MCF 10A (cell line): ENCODE measurements at regions of chr2 and their contacts with region 1.

Region 1: DNA sequence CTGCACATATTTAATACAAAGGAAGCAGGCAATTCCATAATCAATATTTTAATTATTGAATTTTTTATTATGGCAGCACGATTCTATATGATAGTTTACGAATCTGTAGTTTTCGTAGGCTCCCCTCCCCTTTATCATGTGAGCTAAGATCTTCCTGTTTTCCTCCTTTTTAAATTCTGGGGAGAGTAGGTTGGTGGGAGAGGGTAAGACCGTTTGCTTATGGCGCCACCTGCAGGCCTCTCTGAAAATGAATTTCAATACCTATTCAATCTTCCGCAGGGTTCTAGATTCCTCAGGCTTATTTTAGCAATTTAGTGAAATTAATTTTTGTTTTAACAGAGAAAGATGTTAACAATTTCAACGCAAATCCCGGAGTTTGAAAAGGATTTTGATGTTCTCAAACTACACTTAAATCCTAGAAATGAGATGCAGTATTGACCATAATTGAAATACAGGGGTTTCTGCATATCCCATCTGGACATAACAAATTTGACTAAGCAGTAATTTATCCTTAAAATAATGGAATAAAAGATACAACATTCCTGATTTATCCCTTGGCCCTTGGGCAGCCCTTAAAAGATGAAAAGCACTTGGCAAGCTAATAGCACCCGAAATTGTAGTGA is 12.8 kb upstream of the GBX2 start:
- DNase-seq: peak; percentile 75
- H3K4me3 Mint-ChIP-seq: no peak overlapping the region
- H3K27ac Mint-ChIP-seq: no peak overlapping the region
- H3K4me1 Mint-ChIP-seq: peaks cover 13% of the 10 kb centered on the region
- H3K27me3 Mint-ChIP-seq: no peaks in the 10 kb centered on the region
- CTCF ChIP-seq: peak; percentile 57

Region 2: GRCh38 chr2:235766278-235766677 is 414.7 kb before region 1 on chr2:
- CTCF ChIA-PET with region 1: interaction called, 3 read pairs
- POLR2A ChIA-PET with region 1: no interaction called
- intact Hi-C with region 1: loop called (anchors 1 kb)
- DNase-seq: peak; percentile 81
- H3K4me3 Mint-ChIP-seq: no peak overlapping the region
- H3K27ac Mint-ChIP-seq: peak overlapping the region; percentile 88
- H3K4me1 Mint-ChIP-seq: peaks cover 14% of the 10 kb centered on the region
- H3K27me3 Mint-ChIP-seq: no peaks in the 10 kb centered on the region
- CTCF ChIP-seq: peak; percentile 90

Region 3: GRCh38 chr2:235843591-235844395 is 337.1 kb before region 1 on chr2:
- CTCF ChIA-PET with region 1: no interaction called
- POLR2A ChIA-PET with region 1: no interaction called
- intact Hi-C with region 1: no loop called
- DNase-seq: no peak
- H3K4me3 Mint-ChIP-seq: no peak overlapping the region
- H3K27ac Mint-ChIP-seq: no peak overlapping the region
- H3K4me1 Mint-ChIP-seq: no peaks in the 10 kb centered on the region
- H3K27me3 Mint-ChIP-seq: no peaks in the 10 kb centered on the region
- CTCF ChIP-seq: no peak

Region 4: GRCh38 chr2:236169151-236169721 is 11.7 kb before region 1 on chr2:
- CTCF ChIA-PET with region 1: interaction called, 14 read pairs
- POLR2A ChIA-PET with region 1: interaction called, 3 read pairs
- intact Hi-C with region 1: no loop called
- DNase-seq: no peak
- H3K4me3 Mint-ChIP-seq: no peak overlapping the region
- H3K27ac Mint-ChIP-seq: no peak overlapping the region
- H3K4me1 Mint-ChIP-seq: peaks cover 5% of the 10 kb centered on the region
- H3K27me3 Mint-ChIP-seq: peaks cover 57% of the 10 kb centered on the region
- CTCF ChIP-seq: no peak